Breast epithelium (tissue), 4 donors: ENCODE measurements at regions of chr4 and their contacts with region 1.

Region 1: GRCh38 chr4:20574986-20575385 is 125.3 kb upstream of the PACRGL start:
- DNase-seq: no peak
- H3K4me3 ChIP-seq: no peak overlapping the region
- H3K27ac ChIP-seq: no peak overlapping the region
- H3K4me1 ChIP-seq: no peaks in the 10 kb centered on the region
- H3K27me3 ChIP-seq: no peaks in the 10 kb centered on the region
- CTCF ChIP-seq: no peak
- POLR2A ChIP-seq: no peak

Region 2: DNA sequence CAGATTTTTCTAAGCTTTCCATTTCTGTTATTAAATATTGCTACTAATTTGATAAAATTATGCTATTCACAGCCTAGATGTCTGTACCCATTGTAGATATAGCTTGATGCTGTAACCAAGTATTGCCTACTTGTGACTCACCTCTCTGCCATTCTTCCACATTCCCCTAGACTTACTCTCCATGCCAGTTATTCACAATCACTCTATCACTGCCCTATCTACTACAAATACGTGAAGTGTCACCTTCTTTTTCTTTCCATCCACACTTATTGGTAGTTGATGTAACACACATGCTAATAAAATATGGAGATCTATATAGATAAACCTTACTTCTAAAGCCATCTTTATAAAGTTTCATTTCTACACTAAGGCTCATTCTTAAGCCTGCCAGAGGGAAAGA is 54.1 kb before region 1 on chr4:
- intact Hi-C with region 1: loop called (anchors 2 kb)
- DNase-seq: no peak
- H3K4me3 ChIP-seq: no peak overlapping the region
- H3K27ac ChIP-seq: no peak overlapping the region
- H3K4me1 ChIP-seq: no peaks in the 10 kb centered on the region
- H3K27me3 ChIP-seq: no peaks in the 10 kb centered on the region
- CTCF ChIP-seq: no peak
- POLR2A ChIP-seq: no peak